Endothelial cell of umbilical vein (primary cell): ENCODE measurements at regions of chr7 and their contacts with region 1.

Region 1: GRCh38 chr7:141533149-141533949 is 17.9 kb upstream of the AGK start:
- DNase-seq: peak; percentile 67
- H3K4me3 ChIP-seq: no peak overlapping the region
- H3K27ac ChIP-seq: no peak overlapping the region
- H3K4me1 ChIP-seq: no peaks in the 10 kb centered on the region
- H3K27me3 ChIP-seq: peaks cover 0 to 4% of the 10 kb centered on the region in 2 experiments
- CTCF ChIP-seq: peak; percentile 91 to 97
- POLR2A ChIP-seq: no peak

Region 2: GRCh38 chr7:140661121-140661520 is 872.2 kb before region 1 on chr7:
- CTCF ChIA-PET with region 1: interaction called, 12 read pairs
- POLR2A ChIA-PET with region 1: no interaction called
- dilution Hi-C with region 1: no loop called
- intact Hi-C with region 1: no loop called
- DNase-seq: no peak
- H3K4me3 ChIP-seq: no peak overlapping the region
- H3K27ac ChIP-seq: no peak overlapping the region
- H3K4me1 ChIP-seq: peaks cover 3% of the 10 kb centered on the region
- H3K27me3 ChIP-seq: peaks cover 2 to 4% of the 10 kb centered on the region in 2 experiments
- CTCF ChIP-seq: no peak
- POLR2A ChIP-seq: no peak

Region 3: DNA sequence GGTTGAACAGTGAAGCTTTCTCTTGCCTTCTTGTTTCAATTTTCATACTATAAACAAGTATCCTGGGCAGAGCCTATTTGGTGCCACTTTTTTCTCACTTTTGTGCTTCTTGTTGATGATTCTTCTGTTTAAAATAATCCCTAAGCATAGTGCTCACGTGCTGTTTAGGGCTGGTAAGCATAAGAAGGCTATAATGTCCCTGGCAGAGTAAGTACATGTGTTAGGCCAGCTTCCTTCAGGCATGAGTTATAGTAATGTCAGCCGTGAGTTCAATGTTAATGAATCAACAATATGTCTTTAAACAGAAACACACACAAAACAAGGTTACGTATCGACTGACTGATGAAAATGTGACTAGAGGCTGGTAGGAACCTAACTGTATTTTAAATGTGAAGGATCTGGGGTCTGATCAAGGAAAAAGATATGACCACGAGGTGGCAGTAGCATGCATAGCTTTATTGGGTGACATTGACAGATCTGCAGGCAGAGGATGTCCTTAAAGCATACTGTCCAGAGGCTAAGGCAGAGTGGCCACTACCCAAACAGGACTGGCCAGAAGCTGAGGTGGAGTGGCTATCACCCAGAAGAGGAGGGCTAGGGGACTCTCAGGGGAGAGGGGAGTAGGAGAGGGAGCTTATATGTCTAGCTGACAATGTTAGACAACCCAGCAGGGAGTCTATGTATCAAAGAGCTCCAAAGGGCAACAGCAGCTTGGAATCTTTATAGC is 722.4 kb before region 1 on chr7:
- CTCF ChIA-PET with region 1: interaction called, 59 read pairs
- POLR2A ChIA-PET with region 1: no interaction called
- dilution Hi-C with region 1: no loop called
- intact Hi-C with region 1: loop called (anchors 1 kb)
- DNase-seq: peak; percentile 77
- H3K4me3 ChIP-seq: no peak overlapping the region
- H3K27ac ChIP-seq: no peak overlapping the region
- H3K4me1 ChIP-seq: peaks cover 2% of the 10 kb centered on the region
- H3K27me3 ChIP-seq: no peaks in the 10 kb centered on the region
- CTCF ChIP-seq: peak; percentile 62 to 65
- POLR2A ChIP-seq: no peak

Region 4: DNA sequence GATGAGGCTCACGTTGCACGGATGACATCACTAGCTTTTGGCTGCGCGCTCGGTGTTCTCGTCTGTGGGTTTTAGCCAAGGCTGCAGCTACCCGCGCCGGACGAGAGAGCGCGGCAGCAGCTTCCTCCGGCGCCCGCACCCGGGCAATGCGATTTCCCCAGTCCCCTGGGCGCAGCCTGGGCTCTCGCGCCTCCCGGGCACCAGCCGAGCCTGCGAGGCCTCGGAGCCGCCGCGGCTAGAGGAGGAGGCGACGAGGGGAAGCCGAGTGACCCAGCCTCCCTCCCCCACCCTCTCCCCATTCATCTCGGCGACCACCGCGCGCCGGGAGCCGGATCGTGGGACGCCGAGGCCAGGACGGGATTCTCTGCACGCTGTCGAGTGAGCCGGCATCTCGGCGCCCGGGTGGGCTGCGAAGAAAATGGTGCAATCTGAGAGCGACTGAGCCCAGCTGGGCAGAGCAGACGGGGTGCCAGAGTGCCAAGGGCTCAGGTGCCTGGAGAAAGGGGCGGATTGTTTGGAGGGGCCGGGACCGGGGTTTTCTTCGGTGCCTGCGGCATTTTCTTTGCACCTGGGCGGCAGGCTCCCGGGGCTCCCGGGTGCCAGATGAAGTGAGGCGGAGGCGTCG is 460.7 kb before region 1 on chr7:
- CTCF ChIA-PET with region 1: interaction called, 8 read pairs
- POLR2A ChIA-PET with region 1: no interaction called
- dilution Hi-C with region 1: no loop called
- intact Hi-C with region 1: loop called (anchors 2 kb)
- DNase-seq: no peak
- H3K4me3 ChIP-seq: no peak overlapping the region
- H3K27ac ChIP-seq: no peak overlapping the region
- H3K4me1 ChIP-seq: peaks cover 10% of the 10 kb centered on the region
- H3K27me3 ChIP-seq: peaks cover 39 to 57% of the 10 kb centered on the region in 2 experiments
- CTCF ChIP-seq: no peak
- POLR2A ChIP-seq: no peak

Region 5: DNA sequence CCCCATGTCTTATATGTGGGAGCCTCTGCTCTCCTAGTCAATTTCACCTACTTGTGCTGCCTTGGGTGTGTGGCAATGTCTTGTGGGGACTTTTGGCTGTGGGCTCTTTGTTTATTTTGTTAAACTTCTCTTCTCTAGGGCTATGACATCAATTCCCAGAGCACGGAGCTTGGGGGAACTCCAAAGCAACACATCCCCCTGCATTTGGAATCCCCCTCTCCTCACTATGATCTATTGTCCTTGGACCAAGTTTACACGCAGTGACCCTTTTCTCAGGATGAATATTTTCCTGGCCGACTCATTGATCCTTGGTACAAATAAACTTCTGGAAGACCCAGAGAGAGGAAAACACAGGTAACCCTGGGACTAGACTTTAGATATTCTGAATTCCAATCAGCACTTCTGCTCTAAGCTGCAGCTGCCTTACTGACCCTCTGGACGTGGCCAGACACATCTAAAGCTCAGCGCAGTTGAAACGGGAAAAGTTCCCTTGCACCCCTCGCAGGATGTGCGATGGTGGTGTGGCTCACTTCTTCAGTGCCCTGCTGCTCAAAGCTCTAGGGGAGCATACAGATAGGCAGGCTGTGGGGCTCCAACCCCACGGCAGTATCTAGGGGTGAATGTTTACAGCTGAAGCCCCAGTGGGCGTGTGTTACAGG is 348.7 kb before region 1 on chr7:
- CTCF ChIA-PET with region 1: no interaction called
- POLR2A ChIA-PET with region 1: no interaction called
- dilution Hi-C with region 1: no loop called
- intact Hi-C with region 1: no loop called
- DNase-seq: no peak
- H3K4me3 ChIP-seq: no peak overlapping the region
- H3K27ac ChIP-seq: no peak overlapping the region
- H3K4me1 ChIP-seq: no peaks in the 10 kb centered on the region
- H3K27me3 ChIP-seq: no peaks in the 10 kb centered on the region
- CTCF ChIP-seq: no peak
- POLR2A ChIP-seq: no peak

Region 6: GRCh38 chr7:141551094-141551781 is 17.9 kb after region 1 on chr7 and contains the start of gene AGK:
- CTCF ChIA-PET with region 1: interaction called, 19 read pairs
- POLR2A ChIA-PET with region 1: no interaction called
- dilution Hi-C with region 1: no loop called
- intact Hi-C with region 1: no loop called
- DNase-seq: peak; percentile 75
- H3K4me3 ChIP-seq: peak within 1 kb of the TSS; percentile 60 to 97 (median 82)
- H3K27ac ChIP-seq: peak within 1 kb of the TSS; percentile 38
- H3K4me1 ChIP-seq: peaks cover 13% of the 10 kb centered on the region
- H3K27me3 ChIP-seq: no peaks in the 10 kb centered on the region
- CTCF ChIP-seq: no peak
- POLR2A ChIP-seq: peak; percentile 79
- total RNA-seq, gene AGK: 33.9 and 34.3 TPM in 2 replicates